ENCODE measurements at regions of chr14 and their contacts with region 1.

Region 1: GRCh38 chr14:35687335-35687939 is 121.7 kb downstream of the RALGAPA1 start:
- DNase-seq: peak; percentile 69
- H3K4me3 ChIP-seq: no peak overlapping the region
- H3K27ac ChIP-seq: no peak overlapping the region
- H3K4me1 ChIP-seq: no peaks in the 10 kb centered on the region
- CTCF ChIP-seq: peak; percentile 99

Region 2: GRCh38 chr14:35423621-35424020 is 263.8 kb before region 1 on chr14:
- CTCF ChIA-PET with region 1: no interaction called
- POLR2A ChIA-PET with region 1: interaction called, 3 read pairs
- intact Hi-C with region 1: loop called (anchors 2 kb)
- DNase-seq: no peak
- H3K4me3 ChIP-seq: no peak overlapping the region
- H3K27ac ChIP-seq: no peak overlapping the region
- H3K4me1 ChIP-seq: no peaks in the 10 kb centered on the region
- CTCF ChIP-seq: no peak

Region 3: GRCh38 chr14:35438910-35439713 is 248.3 kb before region 1 on chr14:
- CTCF ChIA-PET with region 1: no interaction called
- POLR2A ChIA-PET with region 1: no interaction called
- intact Hi-C with region 1: loop called (anchors 1 kb)
- DNase-seq: peak; percentile 61
- H3K4me3 ChIP-seq: no peak overlapping the region
- H3K27ac ChIP-seq: no peak overlapping the region
- H3K4me1 ChIP-seq: peaks cover 8% of the 10 kb centered on the region
- CTCF ChIP-seq: peak; percentile 77

Region 4: GRCh38 chr14:35533357-35534207 is 153.9 kb before region 1 on chr14 and contains the start of gene INSM2:
- CTCF ChIA-PET with region 1: no interaction called
- POLR2A ChIA-PET with region 1: no interaction called
- intact Hi-C with region 1: loop called (anchors 5 kb)
- DNase-seq: peak; percentile 74
- H3K4me3 ChIP-seq: peak within 1 kb of the TSS; percentile 68
- H3K27ac ChIP-seq: no peak within 1 kb of the TSS
- H3K4me1 ChIP-seq: peaks cover 5% of the 10 kb centered on the region
- CTCF ChIP-seq: 0 out of 2 replicates have a peak, but pooled peaks have one; percentile 15
- total RNA-seq, gene INSM2: 0.09 TPM in 1 of 2 replicates, not detected in the other

Region 5: GRCh38 chr14:35704793-35705493 is 17.5 kb after region 1 on chr14:
- CTCF ChIA-PET with region 1: no interaction called
- POLR2A ChIA-PET with region 1: no interaction called
- intact Hi-C with region 1: no loop called
- DNase-seq: no peak
- H3K4me3 ChIP-seq: no peak overlapping the region
- H3K27ac ChIP-seq: no peak overlapping the region
- H3K4me1 ChIP-seq: no peaks in the 10 kb centered on the region
- CTCF ChIP-seq: no peak